ENCODE measurements at regions of chr7 and their contacts with region 1.

Region 1: GRCh38 chr7:24381894-24382505 is 98.0 kb downstream of the NPY start:
- DNase-seq: peak; percentile 8
- ATAC-seq: peak; percentile 90
- H3K4me3 ChIP-seq: no peak overlapping the region
- H3K27ac ChIP-seq: no peak overlapping the region
- H3K4me1 ChIP-seq: no peaks in the 10 kb centered on the region
- H3K27me3 ChIP-seq: no peaks in the 10 kb centered on the region
- CTCF ChIP-seq: peak; percentile 53
- EP300 ChIP-seq: no peak
- POLR2A ChIP-seq: no peak
- RAD21 ChIP-seq: no peak

Region 2: DNA sequence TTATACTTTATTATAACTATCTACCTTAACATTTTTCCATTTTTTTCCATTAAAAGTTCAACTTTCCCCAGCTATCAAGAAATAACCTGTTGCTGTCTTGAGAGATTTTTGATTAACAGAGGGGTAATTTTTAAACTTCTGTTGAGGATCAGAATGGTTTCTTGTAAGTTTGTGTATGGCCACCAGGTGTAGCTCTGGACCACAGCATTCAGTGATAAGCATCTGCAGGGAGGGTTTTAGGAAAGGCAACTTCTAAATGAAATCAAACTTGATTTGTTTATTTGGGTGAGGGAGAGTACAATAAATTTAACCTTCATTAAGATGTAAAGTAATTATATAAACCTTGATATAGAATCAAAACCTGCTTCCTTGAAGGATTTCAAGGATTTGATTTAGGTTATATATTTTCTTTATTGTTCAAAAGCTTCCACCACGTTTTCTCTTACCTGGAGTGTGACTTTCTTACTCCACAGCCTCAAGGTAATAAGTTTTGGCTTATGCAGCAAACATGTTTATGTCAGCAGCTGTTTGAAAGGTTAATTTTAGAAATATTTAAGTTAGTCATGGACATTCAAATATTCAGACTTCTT is 518.7 kb before region 1 on chr7:
- CTCF ChIA-PET with region 1: no interaction called
- POLR2A ChIA-PET with region 1: no interaction called
- in situ Hi-C with region 1: no loop called
- intact Hi-C with region 1: loop called (anchors 1 kb)
- DNase-seq: peak; percentile 16
- ATAC-seq: 0 out of 3 replicates have a peak, but pooled peaks have one; percentile 41
- H3K4me3 ChIP-seq: no peak overlapping the region
- H3K27ac ChIP-seq: no peak overlapping the region
- H3K4me1 ChIP-seq: no peaks in the 10 kb centered on the region
- H3K27me3 ChIP-seq: no peaks in the 10 kb centered on the region
- CTCF ChIP-seq: peak; percentile 58
- EP300 ChIP-seq: no peak
- POLR2A ChIP-seq: no peak
- RAD21 ChIP-seq: no peak

Region 3: GRCh38 chr7:23938937-23939552 is 443.0 kb before region 1 on chr7:
- CTCF ChIA-PET with region 1: interaction called, 11 read pairs
- POLR2A ChIA-PET with region 1: no interaction called
- in situ Hi-C with region 1: no loop called
- intact Hi-C with region 1: no loop called
- DNase-seq: peak; percentile 33
- ATAC-seq: peak; percentile 100
- H3K4me3 ChIP-seq: no peak overlapping the region
- H3K27ac ChIP-seq: no peak overlapping the region
- H3K4me1 ChIP-seq: no peaks in the 10 kb centered on the region
- H3K27me3 ChIP-seq: no peaks in the 10 kb centered on the region
- CTCF ChIP-seq: peak; percentile 85
- EP300 ChIP-seq: no peak
- POLR2A ChIP-seq: no peak
- RAD21 ChIP-seq: peak; percentile 55; the same call in 1 of the 2 replicates

Region 4: GRCh38 chr7:24290004-24290641 is 91.9 kb before region 1 on chr7:
- CTCF ChIA-PET with region 1: no interaction called
- POLR2A ChIA-PET with region 1: no interaction called
- in situ Hi-C with region 1: no loop called
- intact Hi-C with region 1: loop called (anchors 1 kb)
- DNase-seq: peak; percentile 60
- ATAC-seq: peak; percentile 97
- H3K4me3 ChIP-seq: no peak overlapping the region
- H3K27ac ChIP-seq: no peak overlapping the region
- H3K4me1 ChIP-seq: no peaks in the 10 kb centered on the region
- H3K27me3 ChIP-seq: peaks cover 2 to 8% of the 10 kb centered on the region in 2 experiments; a peak in 2 of 5 replicates
- CTCF ChIP-seq: peak; percentile 75
- EP300 ChIP-seq: no peak
- POLR2A ChIP-seq: no peak
- RAD21 ChIP-seq: peak; percentile 42; the same call in 1 of the 2 replicates

Region 5: GRCh38 chr7:26117142-26117807 is 1735.3 kb after region 1 on chr7:
- CTCF ChIA-PET with region 1: no interaction called
- POLR2A ChIA-PET with region 1: no interaction called
- in situ Hi-C with region 1: no loop called
- intact Hi-C with region 1: loop called (anchors 10 kb)
- DNase-seq: peak; percentile 23
- ATAC-seq: peak; percentile 79
- H3K4me3 ChIP-seq: no peak overlapping the region
- H3K27ac ChIP-seq: no peak overlapping the region
- H3K4me1 ChIP-seq: no peaks in the 10 kb centered on the region
- H3K27me3 ChIP-seq: peaks cover 0 to 7% of the 10 kb centered on the region in 2 experiments; a peak in 2 of 5 replicates
- CTCF ChIP-seq: 0 out of 2 replicates have a peak, but pooled peaks have one; percentile 16
- EP300 ChIP-seq: no peak
- POLR2A ChIP-seq: no peak
- RAD21 ChIP-seq: no peak

Measured in HepG2 (cell line).